ENCODE measurements at regions of chr22 and their contacts with region 1.

Region 1: DNA sequence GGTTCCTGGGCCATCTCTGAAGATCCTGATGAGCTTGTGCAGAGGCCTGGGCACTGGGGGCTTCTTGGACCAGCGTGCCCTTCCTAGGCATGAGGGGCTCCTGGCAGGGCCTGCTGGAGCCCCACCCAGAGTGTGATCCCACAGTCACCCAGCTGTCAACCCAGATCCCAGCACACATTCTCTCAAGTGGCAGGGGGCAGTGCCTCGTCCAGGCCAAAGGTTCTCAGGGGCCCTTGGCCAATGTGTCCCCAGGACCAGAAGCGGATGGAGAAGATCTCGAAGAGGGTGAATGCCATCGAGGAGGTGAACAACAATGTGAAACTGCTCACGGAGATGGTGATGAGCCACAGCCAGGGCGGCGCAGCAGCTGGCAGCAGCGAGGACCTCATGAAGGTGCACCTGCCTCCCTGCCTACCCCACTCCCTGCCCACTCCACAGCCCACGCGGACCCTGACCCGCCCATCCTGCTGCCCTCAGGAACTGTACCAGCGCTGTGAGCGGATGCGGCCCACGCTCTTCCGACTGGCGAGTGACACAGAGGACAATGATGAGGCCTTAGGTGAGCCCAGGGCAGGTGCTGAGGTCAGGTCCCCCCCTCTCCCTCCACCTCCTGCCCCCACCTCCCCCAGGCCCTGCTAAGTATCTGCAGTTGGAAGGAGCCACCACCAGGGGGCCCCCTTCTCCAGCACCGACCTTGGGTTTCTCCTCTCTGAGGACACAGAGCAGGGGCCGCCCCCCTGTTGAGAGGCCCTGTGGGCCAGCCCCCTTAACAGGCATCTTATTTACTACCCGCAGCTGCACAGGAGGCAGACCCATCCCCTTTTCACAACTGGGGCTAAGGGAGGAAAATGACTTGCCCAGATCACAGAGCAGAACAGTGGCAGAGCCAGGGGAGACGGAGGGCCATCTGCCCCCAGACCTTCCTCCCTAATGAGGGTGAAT is 14.7 kb downstream of the GGA1 start:
- DNase-seq: peak; percentile 85
- ATAC-seq: peak; percentile 66
- H3K4me3 Mint-ChIP-seq: no peak overlapping the region
- H3K27ac Mint-ChIP-seq: peak overlapping the region; percentile 89
- H3K4me1 Mint-ChIP-seq: peaks cover 52% of the 10 kb centered on the region
- H3K27me3 Mint-ChIP-seq: no peaks in the 10 kb centered on the region

Region 2: GRCh38 chr22:37633625-37634416 is 10.5 kb after region 1 on chr22:
- CTCF ChIA-PET with region 1: interaction called, 261 read pairs
- POLR2A ChIA-PET with region 1: interaction called, 13 read pairs
- DNase-seq: peak; percentile 81
- ATAC-seq: peak; percentile 53
- H3K4me3 Mint-ChIP-seq: peak overlapping the region; percentile 72
- H3K27ac Mint-ChIP-seq: peak overlapping the region; percentile 97
- H3K4me1 Mint-ChIP-seq: peaks cover 85% of the 10 kb centered on the region
- H3K27me3 Mint-ChIP-seq: no peaks in the 10 kb centered on the region

Region 3: DNA sequence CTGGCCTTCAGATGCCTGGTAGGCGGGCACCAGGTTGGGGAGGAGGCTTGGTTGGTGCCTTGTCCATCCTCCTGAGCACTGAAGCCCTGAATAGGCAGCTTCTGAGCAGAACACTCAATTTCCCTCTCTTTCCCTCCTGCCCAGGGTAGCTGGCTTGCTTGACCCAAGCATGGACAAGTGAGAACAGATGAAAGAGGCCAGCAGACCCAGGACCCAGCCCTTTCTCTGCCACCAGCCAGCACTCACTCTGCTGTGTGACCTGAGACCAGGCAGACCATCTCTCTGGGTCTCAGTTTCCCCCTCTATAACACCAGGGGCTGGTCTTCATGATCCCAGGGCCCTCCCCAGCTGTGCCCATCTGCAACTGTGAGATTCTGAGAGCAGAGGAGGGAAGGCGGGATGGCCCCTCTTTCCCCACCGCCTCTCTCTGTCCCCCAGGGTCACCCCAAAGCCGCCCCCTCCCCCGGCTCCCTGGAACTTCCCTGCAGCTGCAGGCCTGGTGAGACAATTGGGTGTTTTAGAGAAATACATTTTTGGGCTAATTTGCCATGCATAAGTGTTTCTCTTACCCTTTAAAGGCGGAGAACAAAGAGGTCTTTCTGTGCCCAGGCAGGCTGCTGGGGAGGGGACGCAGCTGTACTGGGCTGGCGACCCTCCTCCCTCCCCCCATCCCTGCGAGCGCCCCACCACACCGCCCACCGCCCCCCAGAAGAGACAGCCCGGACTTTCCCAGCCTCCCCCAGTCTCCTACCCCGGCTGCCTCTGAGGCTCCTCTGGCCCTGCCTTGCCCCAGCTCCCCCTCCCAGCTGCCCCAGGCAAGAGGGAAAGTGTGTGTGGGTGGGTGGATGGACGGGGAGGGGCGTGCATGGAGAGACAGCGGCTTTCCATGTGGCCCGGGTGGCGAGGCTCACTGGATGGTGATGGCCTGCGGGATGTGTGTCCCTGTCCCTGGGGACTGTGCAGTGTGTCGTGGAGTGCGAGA is 403.1 kb after region 1 on chr22:
- CTCF ChIA-PET with region 1: no interaction called
- POLR2A ChIA-PET with region 1: no interaction called
- DNase-seq: no peak
- ATAC-seq: no peak
- H3K4me3 Mint-ChIP-seq: no peak overlapping the region
- H3K27ac Mint-ChIP-seq: no peak overlapping the region
- H3K4me1 Mint-ChIP-seq: no peaks in the 10 kb centered on the region
- H3K27me3 Mint-ChIP-seq: peaks cover 3% of the 10 kb centered on the region